GM13977 (cell line): ENCODE measurements at regions of chr12 and their contacts with region 1.

Region 1: DNA sequence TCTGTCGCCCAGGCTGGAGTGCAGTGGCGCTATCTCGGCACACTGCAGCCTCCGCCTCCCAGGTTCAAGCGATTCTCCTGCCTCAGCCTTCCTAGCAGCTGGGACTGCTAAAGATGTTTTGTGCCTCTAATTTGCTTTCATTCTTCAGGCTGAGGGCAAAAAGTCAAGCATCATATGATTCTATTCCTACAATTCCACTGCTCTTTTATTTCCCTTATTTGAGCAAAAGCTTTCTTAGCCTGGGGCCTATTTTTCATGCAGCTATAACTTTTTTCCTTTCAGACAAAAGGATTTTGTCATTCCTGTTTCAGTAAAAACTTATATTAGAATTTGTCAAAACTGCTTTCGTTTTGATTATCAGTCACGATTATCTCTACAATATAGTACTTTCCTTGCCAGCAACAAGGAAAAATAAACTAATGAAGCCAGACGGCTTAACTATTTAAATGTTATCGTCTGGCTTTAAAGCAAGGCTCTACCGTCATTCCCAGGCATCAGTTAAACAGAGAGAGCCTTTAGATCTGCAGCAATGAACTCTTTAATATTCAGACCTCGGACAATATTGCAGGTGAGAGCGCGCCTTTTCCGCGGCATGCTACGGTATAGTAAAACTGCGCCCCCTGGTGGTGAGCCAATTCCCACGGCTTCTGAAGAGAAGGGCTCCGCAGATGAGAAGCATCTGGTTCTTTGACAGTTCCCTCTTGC is 1.4 kb upstream of the SLC2A13 start:
- DNase-seq: peak; percentile 76
- CTCF ChIP-seq: peak; percentile 77

Region 2: DNA sequence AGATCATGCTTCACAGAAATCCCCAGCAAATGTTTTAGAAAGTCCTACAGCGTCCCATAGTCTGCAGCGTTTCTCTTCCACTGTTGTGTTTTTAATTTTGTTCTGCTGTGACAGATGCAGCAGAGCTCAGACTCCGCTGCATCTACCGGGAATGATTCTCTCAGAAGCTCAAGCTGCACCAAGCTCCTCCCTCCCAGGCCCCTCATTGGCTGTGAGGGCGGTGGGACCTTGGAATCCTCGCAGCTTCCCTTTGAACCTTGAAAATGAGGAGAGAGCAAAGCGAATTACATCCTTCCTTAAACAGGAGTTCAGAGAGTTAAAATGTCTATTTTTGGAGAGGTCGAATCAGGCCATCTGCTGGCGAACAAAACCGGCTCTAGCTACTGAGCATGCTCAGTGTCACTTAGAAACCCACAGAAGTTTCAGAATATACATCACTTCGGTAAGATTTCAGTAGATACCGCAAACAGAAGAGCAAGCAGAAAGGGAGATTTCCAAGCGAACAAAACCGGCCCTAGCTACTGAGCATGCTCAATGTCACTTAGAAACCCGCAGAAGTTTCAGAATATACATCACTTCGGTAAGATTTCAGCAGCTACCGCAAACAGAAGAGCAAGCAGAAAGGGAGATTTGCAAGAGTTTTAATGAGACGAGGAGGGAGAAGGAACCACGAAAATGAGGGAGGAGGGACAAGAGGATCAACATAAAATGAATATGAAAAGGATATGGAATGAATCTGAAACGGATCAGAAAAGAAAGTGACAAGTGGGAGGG is 487.4 kb before region 1 on chr12 and contains the start of gene ABCD2:
- in situ Hi-C with region 1: loop called (anchors 25 kb)
- DNase-seq: peak; percentile 61
- CTCF ChIP-seq: peak; percentile 14

Region 3: GRCh38 chr12:39764944-39765560 is 342.2 kb before region 1 on chr12:
- in situ Hi-C with region 1: loop called (anchors 25 kb)
- DNase-seq: peak; percentile 21
- CTCF ChIP-seq: peak; percentile 78

Region 4: GRCh38 chr12:40010899-40011774 is 96.1 kb before region 1 on chr12:
- in situ Hi-C with region 1: loop called (anchors 25 kb)
- DNase-seq: peak; percentile 44
- CTCF ChIP-seq: peak; percentile 86

Region 5: DNA sequence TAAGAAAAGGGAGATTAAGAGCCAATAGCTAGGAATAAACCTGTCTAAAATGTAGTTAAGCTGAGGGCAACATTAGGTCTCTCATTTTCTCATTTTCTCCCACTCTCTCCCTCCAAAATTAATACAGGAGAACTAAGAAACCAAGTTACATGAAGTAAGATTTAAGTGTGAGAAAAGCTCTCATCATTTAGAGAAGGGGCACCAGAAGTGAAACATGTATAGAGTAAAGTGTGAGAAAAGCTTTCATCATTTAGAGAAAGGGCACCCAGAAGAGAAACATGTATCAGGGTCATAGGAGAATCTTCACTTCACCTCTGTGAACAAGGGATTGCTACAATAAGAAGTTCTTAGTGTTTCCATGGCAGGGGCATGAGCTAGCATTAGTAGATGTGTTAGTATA is 452.6 kb after region 1 on chr12:
- in situ Hi-C with region 1: no loop called
- DNase-seq: peak; percentile 18
- CTCF ChIP-seq: no peak